Posterior vena cava (tissue), 2 donors: ENCODE measurements at regions of chr11 and their contacts with region 1.

Region 1: GRCh38 chr11:3797329-3798095 is at the start of gene NUP98:
- DNase-seq: peak; percentile 100
- total RNA-seq, gene NUP98: 51.6 to 53.8 TPM

Region 2: GRCh38 chr11:3834664-3835461 is 37.4 kb after region 1 on chr11:
- intact Hi-C with region 1: loop called in 1 of 2 experiments (anchors 5 kb)
- DNase-seq: peak; percentile 86